MCF 10A (cell line): ENCODE measurements at regions of chr12 and their contacts with region 1.

Region 1: GRCh38 chr12:63843721-63844390 is 644 bp upstream of the SRGAP1 start:
- DNase-seq: peak; percentile 92
- H3K4me3 Mint-ChIP-seq: peak overlapping the region; percentile 99
- H3K27ac Mint-ChIP-seq: peak overlapping the region; percentile 96
- H3K4me1 Mint-ChIP-seq: peaks cover 13% of the 10 kb centered on the region
- H3K27me3 Mint-ChIP-seq: no peaks in the 10 kb centered on the region
- CTCF ChIP-seq: peak; percentile 96

Region 2: GRCh38 chr12:63853978-63854377 is 10.1 kb after region 1 on chr12:
- CTCF ChIA-PET with region 1: interaction called, 9 read pairs
- POLR2A ChIA-PET with region 1: interaction called, 13 read pairs
- intact Hi-C with region 1: no loop called
- DNase-seq: no peak
- H3K4me3 Mint-ChIP-seq: no peak overlapping the region
- H3K27ac Mint-ChIP-seq: no peak overlapping the region
- H3K4me1 Mint-ChIP-seq: peaks cover 11% of the 10 kb centered on the region
- H3K27me3 Mint-ChIP-seq: no peaks in the 10 kb centered on the region
- CTCF ChIP-seq: no peak

Region 3: GRCh38 chr12:63930971-63931370 is 87.1 kb after region 1 on chr12:
- CTCF ChIA-PET with region 1: interaction called, 11 read pairs
- POLR2A ChIA-PET with region 1: interaction called, 3 read pairs
- intact Hi-C with region 1: no loop called
- DNase-seq: peak; percentile 51
- H3K4me3 Mint-ChIP-seq: peak overlapping the region; percentile 15
- H3K27ac Mint-ChIP-seq: peak overlapping the region; percentile 57
- H3K4me1 Mint-ChIP-seq: peaks cover 45% of the 10 kb centered on the region
- H3K27me3 Mint-ChIP-seq: no peaks in the 10 kb centered on the region
- CTCF ChIP-seq: no peak

Region 4: DNA sequence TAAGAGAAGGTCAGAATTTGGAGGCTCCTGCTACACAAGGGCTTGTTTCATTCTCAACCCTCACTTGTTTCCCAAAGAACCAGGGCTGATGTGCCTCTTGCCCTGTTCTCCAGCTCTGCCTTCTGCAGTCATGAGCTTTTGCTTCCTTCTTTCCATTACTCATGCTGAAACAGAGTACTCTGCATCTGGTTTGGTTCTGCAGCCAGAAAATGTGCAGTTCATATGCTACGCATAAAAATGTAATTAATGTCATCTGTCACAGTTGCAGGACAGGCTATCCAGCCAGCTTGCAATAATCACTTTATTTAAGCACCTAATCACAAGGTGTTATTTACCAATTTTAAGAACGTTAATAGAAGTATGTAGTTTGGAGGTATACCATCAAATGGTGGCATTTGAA is 150.8 kb after region 1 on chr12:
- CTCF ChIA-PET with region 1: interaction called, 5 read pairs
- POLR2A ChIA-PET with region 1: interaction called, 13 read pairs
- intact Hi-C with region 1: loop called (anchors 2 kb)
- DNase-seq: no peak
- H3K4me3 Mint-ChIP-seq: no peak overlapping the region
- H3K27ac Mint-ChIP-seq: no peak overlapping the region
- H3K4me1 Mint-ChIP-seq: peaks cover 31% of the 10 kb centered on the region
- H3K27me3 Mint-ChIP-seq: no peaks in the 10 kb centered on the region
- CTCF ChIP-seq: no peak

Region 5: DNA sequence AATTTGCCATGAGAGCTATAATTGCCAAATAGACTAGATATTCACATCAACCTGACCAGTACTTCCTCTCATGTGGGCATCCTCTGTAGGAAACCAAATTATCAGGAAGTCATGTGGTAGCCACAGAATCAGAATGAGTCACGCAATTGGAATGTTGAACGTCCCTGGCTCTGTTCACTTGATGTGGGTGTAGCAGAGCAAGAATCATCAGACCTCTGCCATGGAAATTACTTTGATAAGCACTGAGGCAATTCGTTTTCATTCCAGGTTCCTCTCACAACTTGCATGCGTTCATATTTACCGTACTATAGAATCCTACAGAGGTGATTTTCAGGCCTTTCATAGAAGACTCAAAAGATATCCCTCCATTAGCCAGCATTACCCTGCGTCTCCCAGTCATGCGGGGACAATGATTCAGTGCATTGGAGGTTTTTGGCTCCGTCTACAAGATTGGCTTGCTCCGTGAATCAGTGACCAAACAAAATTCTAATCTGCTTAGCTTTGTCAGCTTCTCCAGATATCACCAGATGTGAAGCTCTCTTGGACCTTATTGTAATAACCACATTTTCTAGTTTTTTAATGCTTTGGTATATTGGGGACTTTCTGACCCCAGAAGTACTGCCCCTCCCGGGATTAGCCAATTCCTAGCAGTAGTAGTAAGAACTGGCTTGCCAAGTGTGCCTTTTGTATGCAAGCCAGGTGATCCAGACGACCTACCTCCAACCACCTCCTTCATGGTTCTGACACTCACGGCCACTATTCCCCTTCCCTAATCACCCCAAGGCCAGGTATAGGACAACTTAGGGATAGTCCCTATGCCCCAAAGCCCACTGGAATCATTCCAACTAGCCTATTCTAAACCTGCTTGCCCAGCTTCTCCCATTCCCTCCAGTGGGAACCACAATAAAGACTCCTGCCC is 244.8 kb after region 1 on chr12:
- CTCF ChIA-PET with region 1: interaction called, 23 read pairs
- POLR2A ChIA-PET with region 1: interaction called, 29 read pairs
- intact Hi-C with region 1: loop called (anchors 5 kb)
- DNase-seq: peak; percentile 94
- H3K4me3 Mint-ChIP-seq: peak overlapping the region; percentile 73
- H3K27ac Mint-ChIP-seq: peak overlapping the region; percentile 99
- H3K4me1 Mint-ChIP-seq: peaks cover 23% of the 10 kb centered on the region
- H3K27me3 Mint-ChIP-seq: no peaks in the 10 kb centered on the region
- CTCF ChIP-seq: no peak

Region 6: DNA sequence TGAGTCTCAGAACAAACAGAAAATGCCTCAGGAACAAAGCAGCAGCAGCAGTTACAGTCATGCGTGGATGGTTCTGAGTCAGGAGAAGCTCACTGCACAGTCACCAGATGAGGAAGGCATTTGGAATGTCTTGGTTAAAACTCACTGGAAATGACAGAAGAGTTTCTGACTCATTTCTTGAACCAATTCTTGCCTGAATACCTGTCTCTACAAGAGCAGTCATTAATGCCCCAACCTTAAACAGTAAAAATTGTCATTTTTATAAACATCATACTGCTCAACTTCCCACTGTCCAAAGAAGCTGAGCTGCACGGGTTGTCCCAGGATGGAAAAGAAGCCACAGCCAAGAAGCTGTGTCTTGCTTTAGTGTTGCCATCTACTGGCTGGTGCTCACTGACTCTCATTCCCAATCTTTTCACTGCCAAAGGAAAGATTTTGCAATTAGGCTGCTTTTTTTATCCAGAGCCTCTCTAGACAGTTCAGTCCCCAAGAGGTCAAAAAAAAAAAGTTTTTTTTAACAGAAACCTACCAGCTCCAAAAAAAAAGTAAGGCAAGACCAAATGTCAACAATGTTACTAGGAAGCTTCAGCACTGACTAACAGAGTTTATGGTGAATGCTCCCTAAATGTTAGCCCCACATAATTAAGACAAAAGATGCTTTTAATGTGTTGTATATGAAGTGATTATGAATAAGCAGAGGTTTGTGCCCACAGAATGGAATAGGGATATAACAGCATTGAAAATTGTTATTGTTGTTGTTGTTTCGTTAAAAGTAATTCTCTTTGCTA is 337.8 kb after region 1 on chr12:
- CTCF ChIA-PET with region 1: interaction called, 13 read pairs
- POLR2A ChIA-PET with region 1: interaction called, 40 read pairs
- intact Hi-C with region 1: loop called (anchors 1 kb)
- DNase-seq: peak; percentile 95
- H3K4me3 Mint-ChIP-seq: peak overlapping the region; percentile 17
- H3K27ac Mint-ChIP-seq: peak overlapping the region; percentile 92
- H3K4me1 Mint-ChIP-seq: peaks cover 49% of the 10 kb centered on the region
- H3K27me3 Mint-ChIP-seq: no peaks in the 10 kb centered on the region
- CTCF ChIP-seq: peak; percentile 56

Region 7: GRCh38 chr12:64392221-64392620 is 548.4 kb after region 1 on chr12:
- CTCF ChIA-PET with region 1: no interaction called
- POLR2A ChIA-PET with region 1: no interaction called
- intact Hi-C with region 1: loop called (anchors 1 kb)
- DNase-seq: peak; percentile 58
- H3K4me3 Mint-ChIP-seq: no peak overlapping the region
- H3K27ac Mint-ChIP-seq: no peak overlapping the region
- H3K4me1 Mint-ChIP-seq: peaks cover 4% of the 10 kb centered on the region
- H3K27me3 Mint-ChIP-seq: no peaks in the 10 kb centered on the region
- CTCF ChIP-seq: peak; percentile 36